OCI-LY7 (cell line): ENCODE measurements at regions of chr12 and their contacts with region 1.

Region 1: GRCh38 chr12:31876568-31877424 is 82.4 kb upstream of the RESF1 start:
- DNase-seq: peak; percentile 59
- H3K4me3 ChIP-seq: no peak overlapping the region
- H3K27ac ChIP-seq: peak overlapping the region; percentile 54
- H3K4me1 ChIP-seq: peaks cover 45% of the 10 kb centered on the region
- CTCF ChIP-seq: no peak

Region 2: GRCh38 chr12:31890295-31891285 is 13.8 kb after region 1 on chr12:
- CTCF ChIA-PET with region 1: no interaction called
- POLR2A ChIA-PET with region 1: interaction called, 12 read pairs
- intact Hi-C with region 1: no loop called
- DNase-seq: peak; percentile 64
- H3K4me3 ChIP-seq: peak overlapping the region; percentile 12
- H3K27ac ChIP-seq: peak overlapping the region; percentile 54
- H3K4me1 ChIP-seq: peaks cover 55% of the 10 kb centered on the region
- CTCF ChIP-seq: no peak